Right lobe of liver (tissue), 6 donors: ENCODE measurements at regions of chr1 and their contacts with region 1.

Region 1: DNA sequence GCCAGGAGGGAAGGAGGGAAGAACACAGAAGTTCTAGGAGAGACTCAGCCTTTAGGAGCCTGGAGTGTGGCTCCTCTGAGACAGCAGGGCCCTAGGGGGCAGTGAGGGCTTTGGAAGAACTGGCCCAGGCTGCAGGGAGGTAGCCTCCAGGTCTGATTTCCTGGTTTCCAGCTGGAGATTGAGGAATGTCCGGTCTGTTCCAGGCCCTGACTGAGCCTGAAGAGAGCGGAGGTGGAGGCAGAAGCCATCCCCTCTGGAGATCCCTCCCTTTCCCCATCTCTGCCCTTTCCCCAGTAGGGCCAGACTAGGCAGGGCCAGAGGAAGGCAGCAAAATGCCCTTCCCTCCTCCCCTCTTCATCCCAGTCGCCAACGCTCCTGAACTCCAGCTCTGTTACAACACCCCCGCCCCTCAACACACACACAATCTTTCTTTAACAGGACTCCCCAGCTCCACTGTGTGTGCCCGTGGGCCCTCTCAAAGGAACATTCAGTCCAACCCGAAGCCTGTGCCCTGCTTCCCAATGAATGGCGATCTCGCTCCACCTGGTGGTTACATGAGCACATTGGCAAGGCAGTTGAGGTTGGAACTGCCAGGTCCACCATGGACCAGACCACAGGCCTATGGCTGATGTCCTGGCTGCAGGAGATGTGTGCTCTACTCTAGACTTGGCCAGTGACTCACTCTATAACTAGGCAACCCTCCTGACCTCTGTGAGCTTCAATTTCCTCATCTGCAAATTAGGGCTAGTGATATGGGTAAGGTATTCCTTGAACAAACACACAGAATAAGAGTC is 32.0 kb downstream of the MAP7D1 start:
- DNase-seq: peak; percentile 78 to 87 (median 82)
- ATAC-seq: peak; percentile 98 to 100 (median 99)
- H3K4me3 ChIP-seq: no peak overlapping the region
- H3K27ac ChIP-seq: peak overlapping the region; percentile 19 to 58 (median 26)
- H3K4me1 ChIP-seq: peaks cover 0 to 5% (median 0%) of the 10 kb centered on the region in 4 donors
- H3K27me3 ChIP-seq: no peaks in the 10 kb centered on the region
- CTCF ChIP-seq: peak; percentile 84 to 96 (median 88)
- POLR2A ChIP-seq: no peak

Region 2: GRCh38 chr1:36099681-36100341 is 88.2 kb before region 1 on chr1:
- intact Hi-C with region 1: loop called in 1 of 2 experiments (anchors 10 kb)
- DNase-seq: peak; percentile 80 to 82 (median 82)
- ATAC-seq: peak; percentile 90 to 94 (median 92)
- H3K4me3 ChIP-seq: peak overlapping the region in 2 of 3 donors; percentile 3 to 29
- H3K27ac ChIP-seq: no peak overlapping the region
- H3K4me1 ChIP-seq: peaks cover 0 to 5% (median 2%) of the 10 kb centered on the region in 4 donors
- H3K27me3 ChIP-seq: no peaks in the 10 kb centered on the region
- CTCF ChIP-seq: peak; percentile 75 to 83 (median 76)
- POLR2A ChIP-seq: no peak

Region 3: GRCh38 chr1:36150296-36151132 is 37.5 kb before region 1 on chr1:
- intact Hi-C with region 1: loop called (anchors 5 kb)
- DNase-seq: peak; percentile 93 to 95 (median 94)
- ATAC-seq: peak; percentile 75 to 85 (median 78)
- H3K4me3 ChIP-seq: no peak overlapping the region
- H3K27ac ChIP-seq: peak overlapping the region; percentile 62 to 95 (median 81)
- H3K4me1 ChIP-seq: peaks cover 0 to 44% (median 13%) of the 10 kb centered on the region in 4 donors
- H3K27me3 ChIP-seq: no peaks in the 10 kb centered on the region
- CTCF ChIP-seq: no peak
- POLR2A ChIP-seq: peak; percentile 70